ENCODE measurements at regions of chr3 and their contacts with region 1.

Region 1: GRCh38 chr3:123723522-123724168 is 138.8 kb upstream of the HACD2 start:
- DNase-seq: peak in 4 of 5 donors; percentile 76 to 97 (median 86)
- H3K4me3 ChIP-seq: peak overlapping the region in 1 of 3 donors; percentile 17
- H3K27ac ChIP-seq: no peak overlapping the region
- H3K4me1 ChIP-seq: peaks cover 0 to 12% (median 4%) of the 10 kb centered on the region in 3 donors
- H3K27me3 ChIP-seq: no peaks in the 10 kb centered on the region
- CTCF ChIP-seq: peak; percentile 92

Region 2: GRCh38 chr3:123652346-123652984 is 71.2 kb before region 1 on chr3:
- intact Hi-C with region 1: loop called (anchors 5 kb)
- DNase-seq: peak; percentile 87 to 93 (median 89)
- H3K4me3 ChIP-seq: no peak overlapping the region
- H3K27ac ChIP-seq: peak overlapping the region; percentile 74 to 89
- H3K4me1 ChIP-seq: peaks cover 4 to 32% (median 26%) of the 10 kb centered on the region in 3 donors
- H3K27me3 ChIP-seq: no peaks in the 10 kb centered on the region
- CTCF ChIP-seq: peak; percentile 95

Region 3: DNA sequence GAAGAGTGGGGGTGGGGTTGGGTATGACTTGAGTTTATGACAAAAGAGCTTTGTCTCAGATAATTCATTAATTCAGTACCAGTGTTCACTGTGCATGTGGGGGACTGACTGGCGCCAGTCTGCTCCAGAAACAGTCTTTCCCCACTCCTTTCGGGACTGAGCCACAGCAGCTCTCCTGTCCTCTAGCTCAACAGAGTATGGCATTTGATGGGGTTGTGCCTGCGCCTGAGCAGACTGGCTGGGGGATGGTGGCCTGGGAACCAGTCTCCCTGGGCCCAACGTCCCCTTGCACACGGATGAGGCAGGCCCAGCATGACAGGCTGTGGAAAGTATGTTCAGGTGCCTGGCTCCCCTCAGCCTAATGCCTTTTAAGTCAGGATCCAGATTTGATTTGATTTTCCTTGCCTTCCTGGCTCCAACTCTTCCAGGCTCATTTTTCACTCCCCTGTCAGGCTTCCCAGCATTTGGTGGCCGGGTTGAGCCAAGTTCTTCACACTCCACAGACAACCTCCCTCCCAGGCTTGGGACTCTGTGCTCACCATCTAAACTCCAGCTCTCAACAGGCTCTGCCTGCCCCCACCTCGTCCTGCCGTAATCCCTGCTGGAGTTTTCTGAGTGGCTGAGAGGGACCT is 55.5 kb after region 1 on chr3:
- intact Hi-C with region 1: no loop called
- DNase-seq: peak in 1 of 5 donors; percentile 64
- H3K4me3 ChIP-seq: no peak overlapping the region
- H3K27ac ChIP-seq: peak overlapping the region; percentile 18 to 72
- H3K4me1 ChIP-seq: peaks cover 0 to 28% (median 8%) of the 10 kb centered on the region in 3 donors
- H3K27me3 ChIP-seq: no peaks in the 10 kb centered on the region
- CTCF ChIP-seq: no peak

Region 4: GRCh38 chr3:123893012-123893411 is 169.4 kb after region 1 on chr3:
- intact Hi-C with region 1: no loop called
- DNase-seq: no peak
- H3K4me3 ChIP-seq: no peak overlapping the region
- H3K27ac ChIP-seq: no peak overlapping the region
- H3K4me1 ChIP-seq: no peaks in the 10 kb centered on the region
- H3K27me3 ChIP-seq: no peaks in the 10 kb centered on the region
- CTCF ChIP-seq: no peak

Measured in kidney (tissue), 22 donors.